GM12878 (cell line): ENCODE measurements at regions of chr1 and their contacts with region 1.

Region 1: DNA sequence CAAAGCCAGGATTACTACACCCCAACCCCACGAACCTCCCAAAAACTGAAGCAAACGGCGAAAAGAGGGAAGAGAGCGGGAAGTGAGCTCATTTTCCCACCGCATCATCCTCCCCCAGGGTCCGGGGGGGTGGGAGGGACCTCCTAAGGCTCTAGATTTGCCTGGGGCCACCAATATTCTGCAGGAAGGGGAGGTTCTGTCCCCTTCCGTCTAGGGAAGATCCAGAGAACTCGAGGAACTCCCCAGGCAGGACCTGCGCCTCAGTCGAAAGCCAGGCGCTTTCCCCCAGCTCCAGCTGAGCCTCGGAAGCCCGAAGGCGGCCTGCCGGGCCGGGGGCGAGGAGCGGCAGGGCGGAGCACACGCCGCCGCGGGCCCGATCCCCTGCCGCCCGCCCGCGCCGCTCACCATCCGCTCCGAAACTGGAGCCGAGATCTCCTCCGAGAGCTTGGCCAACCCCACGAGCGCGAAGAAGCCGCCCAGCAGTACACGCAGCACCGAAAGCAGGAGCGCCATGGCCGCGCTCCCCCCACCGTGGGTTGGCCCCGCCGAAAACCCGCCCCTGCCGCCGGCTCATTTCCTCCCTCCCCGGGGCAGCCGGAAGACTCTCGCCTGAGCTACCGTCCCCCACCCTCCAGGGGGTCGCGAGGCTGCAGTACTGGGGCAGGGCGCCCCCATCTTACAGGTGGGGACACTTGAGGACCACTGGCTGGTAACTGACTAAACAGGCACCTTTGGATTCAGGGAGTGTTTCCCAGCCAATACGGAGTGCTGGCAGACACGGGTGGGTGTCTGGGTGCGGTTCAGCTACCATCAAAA is at the start of gene TMEM35B:
- DNase-seq: no peak
- ATAC-seq: peak; percentile 92
- H3K4me3 ChIP-seq: peak within 1 kb of the TSS; percentile 97
- H3K27ac ChIP-seq: peak within 1 kb of the TSS; percentile 88
- H3K4me1 ChIP-seq: peaks cover 9% of the 10 kb centered on the region
- H3K27me3 ChIP-seq: no peaks in the 10 kb centered on the region
- CTCF ChIP-seq: no peak; a peak in 1 of 6 replicates
- EP300 ChIP-seq: 0 out of 4 replicates have a peak, but pooled peaks of 1 of the 2 experiments have one; percentile 22
- POLR2A ChIP-seq: peak; percentile 97
- RAD21 ChIP-seq: no peak
- polyA plus RNA-seq, gene TMEM35B: 118 to 138 TPM

Region 2: DNA sequence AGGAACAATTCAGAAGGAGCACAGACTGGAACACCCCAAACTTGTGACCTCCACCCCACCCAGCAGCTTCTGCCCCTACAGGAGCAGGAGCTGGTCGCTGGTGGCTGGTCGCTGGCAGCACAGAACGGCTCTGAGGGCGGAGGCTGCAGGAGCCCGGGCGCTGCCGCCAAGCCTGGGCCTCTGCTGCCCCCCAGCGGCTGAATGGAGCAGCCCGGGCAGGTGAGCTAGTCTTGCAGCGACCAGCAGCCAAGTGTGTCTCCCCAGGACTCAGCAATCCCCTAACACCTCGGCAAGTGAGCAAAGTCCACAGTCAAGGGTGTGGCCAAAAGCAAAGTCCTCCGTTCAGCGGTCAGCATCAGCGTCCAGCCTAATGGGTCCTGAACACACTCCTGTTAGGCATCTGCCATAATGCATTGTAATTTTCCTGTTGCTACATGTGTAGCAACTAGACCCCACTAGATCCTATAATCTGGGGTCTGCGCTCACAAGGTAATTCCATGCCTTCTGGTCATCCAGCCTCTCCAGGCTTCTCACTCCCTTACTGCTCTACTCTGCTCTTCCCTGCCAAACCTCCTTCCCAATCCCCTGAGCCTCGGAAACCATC is 242.2 kb before region 1 on chr1:
- CTCF ChIA-PET with region 1: no interaction called
- POLR2A ChIA-PET with region 1: no interaction called
- RAD21 ChIA-PET with region 1: no interaction called
- SMC1A ChIA-PET with region 1: no interaction called
- in situ Hi-C with region 1: no loop called
- intact Hi-C with region 1: no loop called
- DNase-seq: peak; percentile 2
- ATAC-seq: peak; percentile 100
- H3K4me3 ChIP-seq: no peak overlapping the region
- H3K27ac ChIP-seq: no peak overlapping the region
- H3K4me1 ChIP-seq: no peaks in the 10 kb centered on the region
- H3K27me3 ChIP-seq: no peaks in the 10 kb centered on the region; a peak in 1 of 4 replicates
- CTCF ChIP-seq: peak; percentile 94 to 99 (median 94)
- EP300 ChIP-seq: no peak
- POLR2A ChIP-seq: no peak
- RAD21 ChIP-seq: peak; percentile 74

Region 3: GRCh38 chr1:34859446-34860200 is 125.4 kb before region 1 on chr1 and contains the start of gene SMIM12:
- CTCF ChIA-PET with region 1: interaction called, 26 read pairs
- POLR2A ChIA-PET with region 1: interaction called, 5 read pairs
- RAD21 ChIA-PET with region 1: interaction called, 3 read pairs
- SMC1A ChIA-PET with region 1: interaction called, 6 read pairs
- in situ Hi-C with region 1: no loop called
- intact Hi-C with region 1: no loop called
- DNase-seq: peak; percentile 62
- ATAC-seq: peak; percentile 100
- H3K4me3 ChIP-seq: peak within 1 kb of the TSS; percentile 96
- H3K27ac ChIP-seq: peak within 1 kb of the TSS; percentile 81
- H3K4me1 ChIP-seq: no peaks in the 10 kb centered on the region
- H3K27me3 ChIP-seq: no peaks in the 10 kb centered on the region
- CTCF ChIP-seq: peak; percentile 84 to 93 (median 92)
- EP300 ChIP-seq: peak in 1 of 2 experiments; percentile 30; a peak in 1 of 4 replicates
- POLR2A ChIP-seq: peak; percentile 100
- RAD21 ChIP-seq: no peak
- polyA plus RNA-seq, gene SMIM12: 26.1 to 42.9 TPM

Region 4: DNA sequence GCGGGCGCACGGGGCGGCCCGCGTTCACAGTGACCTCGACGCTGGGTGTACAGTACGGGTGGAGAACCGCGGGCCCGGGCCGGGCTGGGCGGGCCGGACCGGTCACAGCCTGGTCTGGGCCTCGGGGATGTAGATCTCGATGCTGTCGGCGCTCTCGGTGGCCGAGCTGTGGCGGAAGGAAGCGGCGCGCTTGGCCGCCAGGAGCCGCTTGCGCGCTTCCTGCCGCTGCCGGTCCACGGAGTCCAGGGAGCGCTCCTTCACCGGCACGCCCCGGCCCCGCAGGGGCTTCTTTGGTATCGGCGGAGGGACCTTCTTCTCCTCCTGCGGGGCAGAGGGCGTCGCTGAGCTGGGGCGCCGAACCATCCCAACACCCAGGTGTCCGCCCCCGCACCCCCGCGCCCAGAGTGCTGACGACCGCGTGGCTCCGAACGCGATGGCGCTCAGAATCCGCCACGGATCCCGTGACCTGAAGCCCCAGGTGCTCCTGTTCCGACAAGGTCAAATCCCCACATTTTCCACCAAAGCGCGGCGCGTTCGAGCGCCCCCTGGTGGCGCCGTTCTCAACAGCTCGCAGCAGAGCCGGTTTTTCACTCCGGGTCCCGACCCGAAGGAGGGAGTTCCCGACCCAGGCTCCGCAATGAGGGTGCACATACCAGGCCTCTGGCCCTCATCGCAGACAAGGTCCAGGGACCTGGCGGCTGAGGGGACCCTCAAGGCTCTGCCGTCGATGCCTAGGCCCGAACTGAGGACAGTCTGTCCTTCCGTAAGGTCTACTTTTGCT is 118.8 kb before region 1 on chr1:
- CTCF ChIA-PET with region 1: interaction called, 26 read pairs
- POLR2A ChIA-PET with region 1: interaction called, 5 read pairs
- RAD21 ChIA-PET with region 1: interaction called, 3 read pairs
- SMC1A ChIA-PET with region 1: no interaction called
- in situ Hi-C with region 1: no loop called
- intact Hi-C with region 1: no loop called
- DNase-seq: peak; percentile 52
- ATAC-seq: peak; percentile 89
- H3K4me3 ChIP-seq: peak overlapping the region; percentile 61
- H3K27ac ChIP-seq: peak overlapping the region; percentile 67
- H3K4me1 ChIP-seq: peaks cover 4% of the 10 kb centered on the region; the same call in 1 of the 2 replicates
- H3K27me3 ChIP-seq: peaks cover 0 to 2% of the 10 kb centered on the region in 2 experiments; a peak in 1 of 4 replicates
- CTCF ChIP-seq: peak; percentile 92 to 96 (median 95)
- EP300 ChIP-seq: no peak
- POLR2A ChIP-seq: peak; percentile 83
- RAD21 ChIP-seq: peak; percentile 38; the same call in 1 of the 2 replicates

Region 5: DNA sequence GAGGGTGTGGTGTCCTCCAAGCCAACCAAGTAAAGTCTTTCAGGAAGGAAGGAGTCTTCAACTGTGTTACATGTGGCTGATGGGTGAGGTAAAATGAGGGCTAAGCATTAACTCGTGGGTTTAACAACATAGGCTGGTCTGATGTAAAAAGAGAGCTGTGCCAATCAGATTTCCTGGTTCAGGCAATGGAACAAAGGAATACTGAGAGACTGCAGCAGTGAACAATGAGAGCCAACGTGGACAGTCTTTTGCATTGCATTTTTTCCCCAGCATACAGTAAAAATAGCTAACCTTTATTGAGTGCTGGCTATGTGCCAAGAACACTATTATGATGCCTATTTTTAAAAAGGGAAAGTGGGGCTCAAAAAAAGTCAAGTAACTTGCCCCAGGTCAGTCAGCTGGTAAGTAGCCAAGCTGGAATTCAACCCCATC is 86.7 kb before region 1 on chr1:
- CTCF ChIA-PET with region 1: no interaction called
- POLR2A ChIA-PET with region 1: no interaction called
- RAD21 ChIA-PET with region 1: no interaction called
- SMC1A ChIA-PET with region 1: no interaction called
- in situ Hi-C with region 1: no loop called
- intact Hi-C with region 1: no loop called
- DNase-seq: no peak
- ATAC-seq: no peak
- H3K4me3 ChIP-seq: no peak overlapping the region
- H3K27ac ChIP-seq: no peak overlapping the region
- H3K4me1 ChIP-seq: no peaks in the 10 kb centered on the region
- H3K27me3 ChIP-seq: peaks cover 0 to 8% of the 10 kb centered on the region in 2 experiments; a peak in 3 of 4 replicates
- CTCF ChIP-seq: no peak
- EP300 ChIP-seq: no peak
- POLR2A ChIP-seq: no peak
- RAD21 ChIP-seq: no peak

Region 6: DNA sequence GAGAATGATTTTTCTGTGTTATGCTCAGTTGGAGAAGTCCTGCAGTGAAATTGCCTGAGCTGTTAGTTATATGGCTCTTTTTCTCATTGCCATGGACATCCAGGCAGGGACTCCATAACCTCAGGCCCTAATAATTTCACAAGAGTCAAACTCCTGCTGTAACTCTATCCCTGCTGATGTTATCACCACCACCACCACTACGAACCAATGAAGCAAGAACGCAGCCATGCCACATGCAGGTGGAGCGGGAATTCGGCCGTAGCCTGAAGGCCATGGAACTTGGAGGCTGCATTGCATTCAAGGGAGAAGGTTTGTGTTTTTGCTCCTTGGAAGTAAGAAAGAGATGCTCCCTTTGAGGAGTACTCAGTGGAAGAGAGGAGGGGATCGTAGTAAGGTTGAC is 38.8 kb before region 1 on chr1:
- CTCF ChIA-PET with region 1: no interaction called
- POLR2A ChIA-PET with region 1: no interaction called
- RAD21 ChIA-PET with region 1: no interaction called
- SMC1A ChIA-PET with region 1: no interaction called
- in situ Hi-C with region 1: no loop called
- intact Hi-C with region 1: no loop called
- DNase-seq: no peak
- ATAC-seq: no peak
- H3K4me3 ChIP-seq: no peak overlapping the region
- H3K27ac ChIP-seq: no peak overlapping the region
- H3K4me1 ChIP-seq: no peaks in the 10 kb centered on the region
- H3K27me3 ChIP-seq: no peaks in the 10 kb centered on the region
- CTCF ChIP-seq: no peak
- EP300 ChIP-seq: no peak
- POLR2A ChIP-seq: no peak
- RAD21 ChIP-seq: no peak

Region 7: DNA sequence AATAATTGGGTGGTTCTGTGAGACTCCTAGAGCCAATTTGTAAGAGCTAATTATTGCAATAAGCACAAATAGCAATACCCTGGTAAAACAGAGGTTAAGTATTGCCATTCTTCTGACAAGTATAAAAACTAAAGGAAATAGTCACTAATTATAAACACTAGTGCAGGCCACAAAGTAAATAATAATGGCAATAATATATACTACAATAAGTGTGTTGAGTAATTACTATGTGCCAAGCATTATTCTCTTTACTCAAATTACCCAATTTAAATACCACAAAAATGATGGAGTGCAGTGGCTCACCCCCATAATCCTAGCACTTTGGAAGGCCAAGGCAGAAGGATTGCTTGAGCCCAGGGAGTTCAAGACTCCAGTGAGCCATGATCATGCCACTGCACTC is 31.4 kb after region 1 on chr1:
- CTCF ChIA-PET with region 1: interaction called, 4 read pairs
- POLR2A ChIA-PET with region 1: interaction called, 13 read pairs
- RAD21 ChIA-PET with region 1: interaction called, 3 read pairs
- SMC1A ChIA-PET with region 1: interaction called, 6 read pairs
- in situ Hi-C with region 1: no loop called
- intact Hi-C with region 1: no loop called
- DNase-seq: no peak
- ATAC-seq: no peak
- H3K4me3 ChIP-seq: no peak overlapping the region
- H3K27ac ChIP-seq: no peak overlapping the region
- H3K4me1 ChIP-seq: no peaks in the 10 kb centered on the region
- H3K27me3 ChIP-seq: no peaks in the 10 kb centered on the region
- CTCF ChIP-seq: no peak
- EP300 ChIP-seq: no peak
- POLR2A ChIP-seq: no peak
- RAD21 ChIP-seq: no peak

Region 8: GRCh38 chr1:35030756-35031446 is 45.9 kb after region 1 on chr1:
- CTCF ChIA-PET with region 1: interaction called, 18 read pairs
- POLR2A ChIA-PET with region 1: interaction called, 17 read pairs
- RAD21 ChIA-PET with region 1: interaction called, 12 read pairs
- SMC1A ChIA-PET with region 1: interaction called, 30 read pairs
- in situ Hi-C with region 1: no loop called
- intact Hi-C with region 1: loop called (anchors 2 kb)
- DNase-seq: no peak
- ATAC-seq: peak; percentile 70
- H3K4me3 ChIP-seq: peak overlapping the region; percentile 85
- H3K27ac ChIP-seq: peak overlapping the region; percentile 90
- H3K4me1 ChIP-seq: peaks cover 3% of the 10 kb centered on the region; the same call in 1 of the 2 replicates
- H3K27me3 ChIP-seq: no peaks in the 10 kb centered on the region
- CTCF ChIP-seq: no peak
- EP300 ChIP-seq: no peak
- POLR2A ChIP-seq: no peak
- RAD21 ChIP-seq: no peak

Region 9: DNA sequence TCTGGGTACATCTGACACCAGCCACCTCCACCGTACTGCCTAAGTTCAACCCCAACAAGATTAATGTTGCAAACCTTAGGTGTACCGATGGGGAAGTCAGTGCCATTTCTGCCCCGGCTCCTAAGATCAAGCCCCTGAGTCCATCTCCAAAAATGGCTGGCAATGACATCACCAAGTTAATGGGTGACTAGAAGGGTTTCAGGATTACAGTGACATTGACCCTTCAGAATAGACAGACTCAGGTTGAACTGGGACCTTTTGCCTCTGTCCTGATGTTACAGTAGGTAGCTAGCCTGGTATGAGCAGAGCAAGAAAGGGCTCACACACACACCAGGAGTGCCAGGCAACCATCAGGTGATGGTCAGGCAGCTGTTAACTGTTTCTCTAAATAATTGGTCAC is 68.4 kb after region 1 on chr1:
- CTCF ChIA-PET with region 1: no interaction called
- POLR2A ChIA-PET with region 1: no interaction called
- RAD21 ChIA-PET with region 1: no interaction called
- SMC1A ChIA-PET with region 1: no interaction called
- in situ Hi-C with region 1: no loop called
- intact Hi-C with region 1: no loop called
- DNase-seq: no peak
- ATAC-seq: peak; percentile 63
- H3K4me3 ChIP-seq: no peak overlapping the region
- H3K27ac ChIP-seq: no peak overlapping the region
- H3K4me1 ChIP-seq: no peaks in the 10 kb centered on the region
- H3K27me3 ChIP-seq: no peaks in the 10 kb centered on the region
- CTCF ChIP-seq: no peak
- EP300 ChIP-seq: no peak
- POLR2A ChIP-seq: no peak
- RAD21 ChIP-seq: no peak

Region 10: DNA sequence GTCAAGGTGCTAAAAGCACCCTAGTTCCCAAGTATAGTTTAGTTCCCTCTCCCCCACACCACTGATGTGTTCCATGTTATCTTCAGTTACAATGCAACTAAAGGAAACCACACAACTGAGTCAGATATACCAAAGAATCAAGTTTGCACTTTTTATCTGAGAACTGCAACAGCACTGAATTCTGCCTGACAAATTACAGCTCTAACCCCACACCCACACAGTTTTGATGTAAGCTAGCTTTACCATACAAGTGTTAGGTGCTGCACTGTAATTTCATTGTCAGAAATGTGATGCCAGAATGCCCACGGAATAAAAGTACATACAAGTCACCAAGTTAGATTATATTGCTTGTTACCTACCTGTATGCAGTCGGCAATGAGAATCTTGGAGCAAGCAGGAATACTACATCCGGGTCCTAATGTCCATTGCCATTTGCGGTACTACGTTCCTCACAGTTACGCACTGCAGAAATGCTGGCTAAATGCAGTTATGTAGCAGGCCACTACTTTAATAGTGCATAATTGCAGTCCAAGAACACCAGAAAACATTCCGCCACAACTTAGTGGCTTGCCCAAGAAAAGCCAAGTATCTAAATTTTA is 195.9 kb after region 1 on chr1:
- CTCF ChIA-PET with region 1: no interaction called
- POLR2A ChIA-PET with region 1: interaction called, 6 read pairs
- RAD21 ChIA-PET with region 1: no interaction called
- SMC1A ChIA-PET with region 1: interaction called, 3 read pairs
- in situ Hi-C with region 1: no loop called
- intact Hi-C with region 1: loop called (anchors 10 kb)
- DNase-seq: no peak
- ATAC-seq: peak; percentile 5; the same call in 2 of the 3 replicates
- H3K4me3 ChIP-seq: no peak overlapping the region
- H3K27ac ChIP-seq: no peak overlapping the region
- H3K4me1 ChIP-seq: peaks cover 3% of the 10 kb centered on the region; the same call in 1 of the 2 replicates
- H3K27me3 ChIP-seq: no peaks in the 10 kb centered on the region
- CTCF ChIP-seq: no peak
- EP300 ChIP-seq: no peak
- POLR2A ChIP-seq: peak; percentile 68
- RAD21 ChIP-seq: no peak